Naive thymus-derived CD4-positive, alpha-beta T cell (primary cell): ENCODE measurements at regions of chr3 and their contacts with region 1.

Region 1: DNA sequence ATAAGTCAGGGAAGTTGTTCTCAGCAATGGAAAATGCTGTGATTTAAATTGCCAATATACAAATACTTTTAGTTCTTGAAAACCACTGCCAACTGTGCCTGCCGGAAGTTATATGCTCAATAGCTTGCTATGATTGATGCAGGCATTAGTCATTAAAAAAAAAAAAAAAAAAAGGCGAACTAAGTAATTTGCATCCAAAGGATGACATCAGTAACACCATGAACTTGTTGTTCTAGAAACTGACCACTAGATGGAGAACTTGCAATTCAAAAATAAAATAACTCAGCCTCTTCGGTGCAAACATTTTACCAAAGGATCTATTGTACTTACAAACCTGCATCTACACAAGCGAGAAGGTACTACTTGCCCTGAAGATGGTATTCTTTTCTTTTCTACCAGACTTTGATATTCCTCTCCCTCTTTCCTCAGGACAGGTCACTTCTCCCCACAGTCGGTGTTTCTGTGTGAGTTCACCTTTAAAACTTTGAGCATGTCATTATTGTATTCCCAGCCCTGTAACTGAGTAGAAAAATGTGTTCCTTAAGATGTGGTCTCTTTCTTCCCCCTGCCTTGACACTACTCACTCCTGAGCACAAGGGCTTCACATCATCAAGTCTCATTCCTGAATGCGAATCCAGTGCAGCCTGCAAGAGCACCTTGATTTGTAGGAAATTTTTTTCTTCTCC is 115.0 kb upstream of the VEPH1 start:
- DNase-seq: peak in 6 of 9 donors; percentile 4 to 44 (median 24)
- ATAC-seq: peak; percentile 78
- H3K4me3 ChIP-seq: no peak overlapping the region
- H3K4me3 Mint-ChIP-seq: peak overlapping the region in 1 of 10 donors; percentile 3
- H3K27ac ChIP-seq: no peak overlapping the region
- H3K27ac Mint-ChIP-seq: peak overlapping the region in 1 of 9 donors; percentile 5
- H3K4me1 ChIP-seq: peaks cover 0 to 4% of the 10 kb centered on the region in 2 donors
- H3K4me1 Mint-ChIP-seq: peaks cover 0 to 6% (median 5%) of the 10 kb centered on the region in 7 donors
- H3K27me3 ChIP-seq: no peaks in the 10 kb centered on the region
- H3K27me3 Mint-ChIP-seq: peaks cover 10 to 22% (median 13%) of the 10 kb centered on the region in 5 donors

Region 2: DNA sequence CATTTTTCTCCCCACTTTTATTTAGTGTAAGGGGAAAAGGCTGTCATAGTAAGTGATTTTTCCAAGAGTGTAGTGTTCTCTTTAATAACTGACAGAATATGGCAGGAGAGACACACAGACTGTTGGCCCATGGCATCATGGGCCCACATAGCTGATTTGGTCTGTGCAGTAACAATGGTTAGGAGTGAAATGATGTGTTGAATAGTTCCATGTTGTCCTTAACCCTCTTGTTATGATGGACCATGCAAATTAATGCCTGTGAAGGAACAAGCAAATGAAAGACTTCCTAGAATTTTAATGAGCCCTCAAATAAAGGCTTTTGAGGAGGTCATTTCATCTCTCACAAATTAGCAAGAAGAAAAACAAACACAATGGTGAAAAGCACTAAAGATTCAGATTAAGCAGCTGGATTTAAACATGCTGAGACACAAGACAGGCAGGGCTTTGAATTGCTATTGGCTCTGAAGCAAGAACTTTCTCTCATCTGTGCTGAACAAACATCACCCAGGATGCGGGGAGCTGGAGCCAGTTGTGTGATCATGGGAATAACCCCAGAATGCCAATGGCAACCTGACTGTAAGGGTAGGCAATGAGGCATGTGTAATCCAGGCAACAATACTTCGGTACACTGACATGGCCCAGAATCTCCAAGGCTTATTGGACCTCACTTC is 21.7 kb after region 1 on chr3:
- CTCF ChIA-PET with region 1: interaction called, 10 read pairs
- POLR2A ChIA-PET with region 1: no interaction called
- intact Hi-C with region 1: no loop called
- DNase-seq: no peak
- ATAC-seq: no peak
- H3K4me3 ChIP-seq: no peak overlapping the region
- H3K4me3 Mint-ChIP-seq: no peak overlapping the region
- H3K27ac ChIP-seq: no peak overlapping the region
- H3K27ac Mint-ChIP-seq: no peak overlapping the region
- H3K4me1 ChIP-seq: no peaks in the 10 kb centered on the region
- H3K4me1 Mint-ChIP-seq: no peaks in the 10 kb centered on the region
- H3K27me3 ChIP-seq: no peaks in the 10 kb centered on the region
- H3K27me3 Mint-ChIP-seq: peaks cover 0 to 26% (median 18%) of the 10 kb centered on the region in 5 donors

Region 3: DNA sequence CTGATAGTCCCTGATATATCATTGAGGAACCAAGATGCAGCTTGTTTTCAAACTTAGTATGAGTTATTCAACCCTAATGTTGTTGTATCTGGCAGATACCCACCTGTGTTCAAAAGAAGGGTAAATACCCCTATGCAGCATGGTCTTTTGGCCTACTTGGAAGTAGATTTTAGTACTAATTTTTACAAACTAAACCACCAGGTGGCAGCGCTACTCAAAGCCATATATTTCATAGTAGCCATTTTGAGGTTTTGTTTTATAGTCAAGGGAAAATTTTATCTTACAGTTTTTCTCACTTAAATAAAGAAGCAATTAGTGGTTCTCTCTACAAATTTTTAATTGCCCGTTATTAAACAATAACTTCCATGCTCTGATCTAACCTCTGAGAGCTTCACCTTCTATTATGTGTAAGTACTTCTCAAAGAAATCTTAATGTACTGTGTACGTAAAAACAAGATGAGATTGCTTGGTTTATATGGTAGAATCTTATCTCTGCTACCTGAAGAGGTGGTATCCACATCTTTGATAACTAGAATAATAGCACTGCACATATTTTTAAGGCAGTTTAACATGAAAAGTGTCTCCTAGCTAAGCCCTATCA is 921.3 kb after region 1 on chr3:
- CTCF ChIA-PET with region 1: no interaction called
- POLR2A ChIA-PET with region 1: no interaction called
- intact Hi-C with region 1: loop called in 1 of 2 experiments (anchors 5 kb)
- DNase-seq: peak in 7 of 9 donors; percentile 4 to 34 (median 18)
- ATAC-seq: peak; percentile 67
- H3K4me3 ChIP-seq: no peak overlapping the region
- H3K4me3 Mint-ChIP-seq: no peak overlapping the region
- H3K27ac ChIP-seq: no peak overlapping the region
- H3K27ac Mint-ChIP-seq: no peak overlapping the region
- H3K4me1 ChIP-seq: no peaks in the 10 kb centered on the region
- H3K4me1 Mint-ChIP-seq: no peaks in the 10 kb centered on the region
- H3K27me3 ChIP-seq: no peaks in the 10 kb centered on the region
- H3K27me3 Mint-ChIP-seq: no peaks in the 10 kb centered on the region